OCI-LY7 (cell line): ENCODE measurements at regions of chrX and their contacts with region 1.

Region 1: DNA sequence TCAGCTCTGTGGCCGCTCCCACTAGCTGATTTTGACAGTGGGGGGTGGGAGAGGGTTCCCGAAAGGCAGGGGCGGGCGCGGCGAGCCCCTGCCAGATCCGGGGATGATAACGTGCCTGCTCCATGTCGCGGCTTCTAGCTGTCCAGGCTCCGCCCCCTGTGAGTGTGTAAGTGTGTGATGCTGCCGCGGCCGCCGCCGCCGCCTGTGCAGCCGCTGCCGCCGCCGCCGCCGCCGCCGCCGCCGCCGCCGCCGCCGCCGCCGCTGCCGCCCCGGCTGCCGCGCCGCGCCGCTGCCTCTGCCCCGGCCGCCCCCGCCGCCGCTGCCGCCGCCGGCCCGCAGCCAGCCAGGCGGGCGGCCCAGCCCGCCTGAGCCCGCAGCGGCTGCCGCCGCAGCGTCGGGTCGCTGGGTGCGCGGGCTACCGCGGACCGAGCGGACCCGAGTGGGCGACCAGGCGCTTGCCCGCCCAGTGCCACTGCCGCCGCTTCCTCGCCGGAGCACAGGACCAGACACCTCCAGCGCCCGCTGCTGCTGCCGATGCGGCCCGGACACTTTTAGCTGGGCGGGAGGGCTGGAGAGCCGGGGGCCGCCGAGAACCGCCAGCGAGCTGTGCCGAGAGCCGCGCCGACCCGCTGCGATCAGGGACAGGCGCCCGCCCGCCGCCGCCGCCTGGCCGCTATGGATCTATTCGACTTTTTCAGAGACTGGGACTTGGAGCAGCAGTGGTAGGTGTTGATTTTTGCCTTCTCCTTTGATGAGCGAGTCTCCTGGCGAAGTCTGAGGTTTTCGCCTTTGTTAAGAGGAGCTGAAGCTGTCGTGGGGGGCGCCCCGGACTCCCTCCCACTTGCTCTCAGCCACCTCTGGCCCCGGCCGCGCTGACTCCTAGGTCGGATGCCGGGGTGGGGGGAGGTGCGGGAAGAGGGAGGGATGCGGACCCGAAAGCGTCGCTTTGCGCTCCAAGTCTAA is at the start of gene AFF2:
- DNase-seq: peak; percentile 86
- H3K4me3 ChIP-seq: peak within 1 kb of the TSS; percentile 89
- H3K27ac ChIP-seq: peak within 1 kb of the TSS; percentile 91
- H3K4me1 ChIP-seq: peaks cover 57% of the 10 kb centered on the region
- CTCF ChIP-seq: no peak
- total RNA-seq, gene AFF2: 74.1 and 102 TPM in 2 replicates

Region 2: GRCh38 chrX:148380650-148381561 is 119.8 kb before region 1 on chrX:
- CTCF ChIA-PET with region 1: no interaction called
- POLR2A ChIA-PET with region 1: interaction called, 5 read pairs
- intact Hi-C with region 1: loop called (anchors 5 kb)
- DNase-seq: peak; percentile 65
- H3K4me3 ChIP-seq: peak overlapping the region; percentile 60
- H3K27ac ChIP-seq: peak overlapping the region; percentile 87
- H3K4me1 ChIP-seq: peaks cover 36% of the 10 kb centered on the region
- CTCF ChIP-seq: no peak

Region 3: DNA sequence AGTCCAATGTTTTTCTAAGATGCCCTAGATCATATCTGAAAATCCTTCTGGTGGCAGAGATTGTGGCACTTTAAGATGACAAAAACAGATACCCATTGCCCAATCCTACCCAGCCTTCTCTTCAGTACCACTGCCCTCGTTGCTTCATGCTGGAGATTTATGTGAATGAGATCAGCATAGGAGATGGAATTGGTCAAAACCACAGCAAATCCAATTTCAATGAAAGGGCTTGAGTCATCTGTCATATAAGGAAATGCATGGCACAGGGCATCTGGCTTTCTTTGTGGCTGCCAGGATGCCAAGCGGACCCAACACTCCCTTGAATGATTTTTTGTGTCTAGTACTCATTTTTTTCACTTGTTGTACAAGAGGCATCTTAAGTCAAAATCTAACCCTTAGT is 16.5 kb after region 1 on chrX:
- CTCF ChIA-PET with region 1: no interaction called
- POLR2A ChIA-PET with region 1: interaction called, 27 read pairs
- intact Hi-C with region 1: loop called (anchors 2 kb)
- DNase-seq: no peak
- H3K4me3 ChIP-seq: no peak overlapping the region
- H3K27ac ChIP-seq: peak overlapping the region; percentile 47
- H3K4me1 ChIP-seq: peaks cover 96% of the 10 kb centered on the region
- CTCF ChIP-seq: no peak

Region 4: DNA sequence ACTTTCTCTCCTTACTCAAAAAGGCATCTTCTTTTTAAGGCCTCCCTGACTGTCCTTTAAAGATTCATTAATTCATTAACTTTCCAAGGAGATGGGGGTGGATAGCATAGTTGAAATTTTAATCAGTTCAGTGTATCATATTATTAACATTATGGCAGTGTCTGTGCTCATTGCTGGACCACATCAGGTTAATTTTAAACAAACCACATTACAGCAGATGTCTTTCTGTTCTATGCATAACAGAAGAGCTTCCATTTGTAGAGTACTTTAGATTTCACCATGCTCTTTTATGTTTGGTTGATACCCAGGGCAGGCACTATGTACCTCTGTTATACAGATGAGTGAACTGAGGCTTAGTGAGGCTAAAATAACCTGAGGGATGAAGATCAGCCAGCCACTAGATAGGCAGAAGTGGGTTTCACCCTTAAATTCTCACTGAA is 40.9 kb after region 1 on chrX:
- CTCF ChIA-PET with region 1: interaction called, 4 read pairs
- POLR2A ChIA-PET with region 1: interaction called, 98 read pairs
- intact Hi-C with region 1: loop called (anchors 1 kb)
- DNase-seq: peak; percentile 58
- H3K4me3 ChIP-seq: peak overlapping the region; percentile 56
- H3K27ac ChIP-seq: peak overlapping the region; percentile 96
- H3K4me1 ChIP-seq: peaks cover 97% of the 10 kb centered on the region
- CTCF ChIP-seq: no peak

Region 5: DNA sequence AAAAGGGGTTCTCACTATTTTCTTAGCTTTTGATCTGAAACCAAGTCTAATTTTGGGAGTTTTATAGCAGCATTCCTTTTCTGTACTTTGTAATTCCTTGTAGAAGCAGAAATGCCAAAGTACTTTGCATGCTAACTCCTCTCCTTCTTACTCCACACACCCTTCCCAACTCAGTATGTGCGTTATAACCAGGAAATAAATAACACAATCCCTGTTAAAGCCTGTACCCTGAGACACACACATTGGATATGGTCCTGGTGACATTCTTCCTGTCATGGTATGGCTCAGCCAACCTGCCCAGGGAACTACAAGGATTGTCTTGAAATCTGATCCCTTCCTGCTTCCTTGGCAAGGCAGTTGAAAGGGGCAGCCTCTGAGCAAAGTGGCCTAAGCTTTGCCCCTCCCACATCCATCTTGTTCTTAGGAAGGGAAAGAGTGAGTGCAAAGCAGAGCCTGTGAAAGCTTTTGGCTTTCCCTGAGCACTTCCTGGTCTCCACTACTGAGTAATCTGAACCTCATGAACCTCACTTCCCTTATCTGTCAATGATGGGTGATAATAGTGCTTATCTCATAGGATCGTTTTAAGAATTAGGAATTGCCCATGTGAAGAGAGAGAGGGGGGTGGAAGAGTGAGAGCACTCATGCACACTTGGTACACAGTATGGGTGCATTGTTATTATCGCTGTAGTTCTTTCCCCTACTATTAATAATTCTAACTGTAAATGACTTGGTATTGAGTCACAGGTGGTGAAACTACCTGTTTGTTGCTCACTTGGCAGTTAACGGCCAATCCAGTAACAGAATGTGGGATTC is 109.0 kb after region 1 on chrX:
- CTCF ChIA-PET with region 1: no interaction called
- POLR2A ChIA-PET with region 1: interaction called, 4 read pairs
- intact Hi-C with region 1: loop called (anchors 1 kb)
- DNase-seq: peak; percentile 86
- H3K4me3 ChIP-seq: peak overlapping the region; percentile 60
- H3K27ac ChIP-seq: peak overlapping the region; percentile 99
- H3K4me1 ChIP-seq: peaks cover 61% of the 10 kb centered on the region
- CTCF ChIP-seq: no peak

Region 6: DNA sequence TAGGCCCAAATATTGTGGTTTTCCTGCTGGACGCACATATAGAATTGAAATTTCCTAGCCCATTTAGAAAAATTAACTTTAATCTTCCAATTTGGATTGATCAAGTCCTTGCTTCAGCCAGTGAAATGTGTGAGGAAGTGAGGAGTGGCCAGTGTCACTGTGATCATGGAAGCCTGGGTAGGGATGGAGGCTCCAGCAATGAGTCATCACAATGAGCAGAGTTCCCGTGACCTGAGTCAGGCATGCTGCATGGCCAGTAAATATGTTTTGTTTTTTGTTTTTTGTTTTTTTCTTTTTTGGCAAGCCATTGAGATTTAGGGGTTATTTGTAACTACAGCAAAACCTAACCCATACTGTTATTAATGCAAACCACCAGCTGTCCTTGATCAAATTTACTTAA is 952.3 kb after region 1 on chrX:
- CTCF ChIA-PET with region 1: no interaction called
- POLR2A ChIA-PET with region 1: no interaction called
- intact Hi-C with region 1: no loop called
- DNase-seq: no peak
- H3K4me3 ChIP-seq: no peak overlapping the region
- H3K27ac ChIP-seq: no peak overlapping the region
- H3K4me1 ChIP-seq: no peaks in the 10 kb centered on the region
- CTCF ChIP-seq: no peak